IMR-90 (cell line): ENCODE measurements at regions of chr4 and their contacts with region 1.

Region 1: DNA sequence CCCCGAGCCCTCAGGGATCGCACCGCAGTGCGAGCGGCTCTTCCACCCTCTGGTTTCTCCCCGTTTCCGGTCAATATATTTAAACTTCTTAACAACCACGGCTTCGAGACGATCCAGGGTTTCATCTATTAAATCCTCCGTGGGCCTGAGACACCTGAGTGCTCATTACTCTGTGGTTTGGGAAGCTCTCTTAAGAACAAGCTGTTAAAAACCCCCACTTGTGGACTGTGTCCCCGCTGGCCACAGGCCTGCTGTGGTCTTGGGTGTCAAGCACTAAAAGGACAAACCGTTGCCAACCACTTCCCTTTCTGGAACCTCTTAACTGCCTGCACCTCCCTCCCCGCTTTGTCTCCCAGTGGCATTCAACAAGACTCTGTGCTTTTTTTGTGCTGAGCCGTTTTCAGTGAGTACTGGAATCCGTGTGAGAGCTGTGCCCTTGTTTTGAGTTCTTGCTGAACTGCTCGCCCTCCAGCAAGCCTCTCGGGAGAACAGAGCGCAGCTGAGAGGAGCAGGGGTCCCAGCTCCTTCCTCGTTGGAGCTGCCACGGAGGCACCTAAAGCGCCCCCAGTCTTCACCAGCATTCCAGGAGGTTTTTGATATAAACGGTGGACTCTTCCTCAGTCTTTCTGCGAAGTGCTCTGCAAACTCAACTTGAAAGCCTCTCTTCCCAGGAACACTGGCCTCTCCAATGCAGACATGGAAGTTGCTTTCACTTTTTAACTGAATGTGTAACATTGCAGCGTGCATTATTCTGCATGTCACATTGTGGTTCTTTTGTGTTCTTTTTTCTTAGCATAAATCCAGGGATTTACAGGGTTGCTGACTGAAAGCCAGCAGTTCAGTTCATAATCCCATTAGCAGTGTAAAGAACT is 691 bp upstream of the IGFBP7 start:
- DNase-seq: peak; percentile 68
- ATAC-seq: peak; percentile 50
- H3K4me3 ChIP-seq: peak overlapping the region; percentile 94
- H3K27ac ChIP-seq: peak overlapping the region; percentile 95
- H3K4me1 ChIP-seq: peaks cover 15% of the 10 kb centered on the region
- H3K27me3 ChIP-seq: no peaks in the 10 kb centered on the region
- CTCF ChIP-seq: no peak
- POLR2A ChIP-seq: no peak; the same call in 1 of the 2 replicates
- RAD21 ChIP-seq: peak; percentile 7; the same call in 1 of the 2 replicates

Region 2: DNA sequence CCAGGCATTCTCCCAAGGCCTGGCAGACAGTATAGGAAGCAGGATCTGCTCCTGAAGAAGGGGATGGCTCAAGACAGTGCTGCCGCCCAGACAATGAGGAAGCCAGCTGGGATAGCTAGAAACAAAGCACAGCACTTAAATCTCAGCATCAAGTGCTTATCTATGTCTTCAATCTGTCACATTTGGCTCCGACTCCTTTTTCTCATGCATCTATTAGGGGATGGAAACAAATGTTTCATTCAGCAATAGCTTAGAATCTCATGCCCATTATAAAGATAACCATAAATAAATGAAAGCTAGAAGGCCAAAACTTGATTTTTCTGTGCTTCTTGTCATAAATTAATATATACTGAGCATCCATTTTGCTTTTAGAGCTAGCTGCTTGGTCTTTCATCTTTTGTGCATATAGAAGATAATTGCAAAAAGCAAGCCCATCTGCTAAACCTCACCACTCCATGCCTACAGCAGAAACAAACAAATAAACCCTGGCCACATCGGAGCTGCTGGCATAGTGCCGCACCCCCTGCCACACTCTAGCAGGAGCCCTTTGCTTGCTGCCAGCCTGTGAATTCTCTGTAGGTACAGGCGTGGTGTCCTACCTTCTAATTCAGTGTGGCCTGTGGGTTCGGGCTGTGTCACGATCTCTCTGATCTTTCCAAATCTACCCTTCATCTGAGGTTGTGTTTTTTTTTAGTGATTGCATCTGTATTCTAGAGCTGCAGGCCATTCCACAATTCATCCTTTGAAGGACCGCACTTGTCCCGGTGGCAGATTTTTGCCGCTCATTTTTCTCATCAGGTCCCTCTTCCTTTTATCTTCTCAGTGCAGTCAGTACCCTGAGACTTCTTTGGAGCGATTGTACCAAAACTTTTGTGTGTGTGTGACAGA is 799.3 kb before region 1 on chr4:
- CTCF ChIA-PET with region 1: no interaction called
- POLR2A ChIA-PET with region 1: interaction called, 17 read pairs
- dilution Hi-C with region 1: no loop called
- in situ Hi-C with region 1: no loop called
- intact Hi-C with region 1: no loop called
- DNase-seq: no peak
- ATAC-seq: no peak
- H3K4me3 ChIP-seq: no peak overlapping the region
- H3K27ac ChIP-seq: no peak overlapping the region
- H3K4me1 ChIP-seq: no peaks in the 10 kb centered on the region
- H3K27me3 ChIP-seq: 0 out of 2 replicates have a peak, but pooled peaks cover 2% of the 10 kb centered on the region
- CTCF ChIP-seq: no peak
- POLR2A ChIP-seq: no peak
- RAD21 ChIP-seq: no peak

Region 3: GRCh38 chr4:57020467-57021101 is 90.3 kb before region 1 on chr4:
- CTCF ChIA-PET with region 1: interaction called, 5 read pairs
- POLR2A ChIA-PET with region 1: no interaction called
- dilution Hi-C with region 1: no loop called
- in situ Hi-C with region 1: no loop called
- intact Hi-C with region 1: loop called (anchors 5 kb)
- DNase-seq: peak; percentile 94
- ATAC-seq: peak; percentile 69
- H3K4me3 ChIP-seq: no peak overlapping the region
- H3K27ac ChIP-seq: no peak overlapping the region
- H3K4me1 ChIP-seq: peaks cover 8% of the 10 kb centered on the region
- H3K27me3 ChIP-seq: no peaks in the 10 kb centered on the region
- CTCF ChIP-seq: no peak
- POLR2A ChIP-seq: no peak
- RAD21 ChIP-seq: no peak

Region 4: DNA sequence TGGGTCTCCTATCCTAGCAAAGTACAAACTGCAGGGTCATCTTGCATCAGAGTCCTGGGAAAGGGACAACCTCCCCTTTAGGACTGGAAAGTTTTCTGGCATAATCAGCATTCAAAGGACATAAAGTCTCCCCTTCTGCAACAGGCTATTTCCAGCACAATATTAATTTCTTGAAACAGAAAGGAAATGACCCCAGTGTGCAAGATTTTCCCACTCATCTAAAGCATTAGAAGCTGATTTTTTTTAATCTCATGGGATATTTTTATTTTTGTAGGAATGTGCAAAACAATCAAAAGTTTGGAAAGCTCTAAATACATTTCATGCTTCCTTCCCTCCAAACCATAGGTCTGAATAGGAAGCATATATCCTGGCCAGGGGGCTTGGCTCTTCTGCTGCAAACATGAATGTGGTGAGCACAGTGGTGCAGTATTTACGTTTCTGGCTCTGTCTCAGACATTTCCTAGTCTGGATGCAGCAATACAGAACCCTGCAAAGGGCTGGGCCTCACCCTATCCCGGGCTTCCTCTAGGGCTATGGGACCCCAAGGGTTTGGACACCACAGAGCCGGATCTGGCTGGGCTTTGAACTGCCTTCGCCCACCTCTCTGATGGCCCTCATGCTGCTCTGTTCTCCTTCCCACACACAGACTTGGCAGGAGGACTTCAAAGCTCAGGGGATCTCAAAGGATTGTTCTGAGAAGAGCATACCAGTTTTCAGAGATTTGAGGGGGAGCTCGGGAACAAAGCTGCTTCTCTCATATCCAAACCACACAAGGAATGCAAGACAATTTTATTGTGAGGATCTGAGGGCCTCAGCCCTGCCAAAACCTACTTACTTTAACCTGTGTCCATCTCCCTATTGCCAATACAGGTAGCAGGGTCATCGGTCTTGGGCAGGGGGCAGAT is 67.3 kb before region 1 on chr4:
- CTCF ChIA-PET with region 1: interaction called, 5 read pairs
- POLR2A ChIA-PET with region 1: no interaction called
- dilution Hi-C with region 1: no loop called
- in situ Hi-C with region 1: no loop called
- intact Hi-C with region 1: loop called (anchors 2 kb)
- DNase-seq: peak; percentile 54
- ATAC-seq: peak; percentile 53
- H3K4me3 ChIP-seq: no peak overlapping the region
- H3K27ac ChIP-seq: peak overlapping the region; percentile 90
- H3K4me1 ChIP-seq: peaks cover 23% of the 10 kb centered on the region
- H3K27me3 ChIP-seq: no peaks in the 10 kb centered on the region
- CTCF ChIP-seq: no peak
- POLR2A ChIP-seq: no peak
- RAD21 ChIP-seq: no peak

Region 5: DNA sequence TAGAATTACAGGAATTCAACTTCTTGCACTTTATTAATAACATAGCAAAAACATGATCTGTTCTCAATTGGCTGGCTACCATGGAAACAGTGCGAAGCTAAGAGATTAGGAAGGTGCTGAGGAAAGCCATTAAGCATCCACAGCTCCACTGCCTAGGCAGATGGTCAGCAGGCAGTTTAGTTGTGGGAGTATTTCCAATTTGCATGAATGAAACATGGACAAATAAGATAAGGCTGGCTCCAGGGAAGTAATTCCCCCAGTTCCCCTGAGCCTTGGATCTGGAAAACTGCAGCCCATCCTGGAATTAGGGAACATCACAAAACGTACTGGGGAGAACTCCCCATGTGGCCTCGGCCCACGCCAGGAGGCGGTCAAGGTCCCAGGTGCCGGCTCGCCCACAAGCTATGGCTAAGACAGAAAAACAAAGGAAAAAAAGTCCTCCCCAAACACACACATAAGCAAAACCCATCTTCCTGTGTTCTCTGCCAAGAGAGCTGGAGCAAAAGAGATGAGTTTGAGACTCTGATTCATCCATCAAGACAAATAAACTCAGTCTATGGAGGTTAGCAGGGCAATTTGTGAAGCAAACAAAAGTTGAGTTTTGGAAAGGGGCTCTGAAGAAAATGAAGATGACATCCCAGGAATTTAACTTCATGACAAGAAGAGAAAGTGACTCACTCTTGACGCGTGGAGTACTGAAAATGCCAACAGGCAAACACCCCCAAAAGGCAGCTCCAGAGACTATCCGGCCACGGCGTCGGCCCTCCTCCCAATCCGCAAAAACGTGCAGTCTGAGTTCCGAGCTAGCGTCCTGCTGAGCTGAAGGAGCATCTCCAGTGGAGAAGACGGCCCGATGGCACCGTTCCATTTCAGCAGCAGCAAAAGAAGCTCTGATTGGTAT is 45.8 kb before region 1 on chr4:
- CTCF ChIA-PET with region 1: no interaction called
- POLR2A ChIA-PET with region 1: no interaction called
- dilution Hi-C with region 1: no loop called
- in situ Hi-C with region 1: no loop called
- intact Hi-C with region 1: loop called (anchors 5 kb)
- DNase-seq: peak; percentile 98
- ATAC-seq: peak; percentile 76
- H3K4me3 ChIP-seq: peak overlapping the region; percentile 8; the same call in 1 of the 2 replicates
- H3K27ac ChIP-seq: peak overlapping the region; percentile 65
- H3K4me1 ChIP-seq: peaks cover 30% of the 10 kb centered on the region
- H3K27me3 ChIP-seq: no peaks in the 10 kb centered on the region
- CTCF ChIP-seq: no peak
- POLR2A ChIP-seq: no peak; the same call in 1 of the 2 replicates
- RAD21 ChIP-seq: peak; percentile 1; the same call in 1 of the 2 replicates

Region 6: DNA sequence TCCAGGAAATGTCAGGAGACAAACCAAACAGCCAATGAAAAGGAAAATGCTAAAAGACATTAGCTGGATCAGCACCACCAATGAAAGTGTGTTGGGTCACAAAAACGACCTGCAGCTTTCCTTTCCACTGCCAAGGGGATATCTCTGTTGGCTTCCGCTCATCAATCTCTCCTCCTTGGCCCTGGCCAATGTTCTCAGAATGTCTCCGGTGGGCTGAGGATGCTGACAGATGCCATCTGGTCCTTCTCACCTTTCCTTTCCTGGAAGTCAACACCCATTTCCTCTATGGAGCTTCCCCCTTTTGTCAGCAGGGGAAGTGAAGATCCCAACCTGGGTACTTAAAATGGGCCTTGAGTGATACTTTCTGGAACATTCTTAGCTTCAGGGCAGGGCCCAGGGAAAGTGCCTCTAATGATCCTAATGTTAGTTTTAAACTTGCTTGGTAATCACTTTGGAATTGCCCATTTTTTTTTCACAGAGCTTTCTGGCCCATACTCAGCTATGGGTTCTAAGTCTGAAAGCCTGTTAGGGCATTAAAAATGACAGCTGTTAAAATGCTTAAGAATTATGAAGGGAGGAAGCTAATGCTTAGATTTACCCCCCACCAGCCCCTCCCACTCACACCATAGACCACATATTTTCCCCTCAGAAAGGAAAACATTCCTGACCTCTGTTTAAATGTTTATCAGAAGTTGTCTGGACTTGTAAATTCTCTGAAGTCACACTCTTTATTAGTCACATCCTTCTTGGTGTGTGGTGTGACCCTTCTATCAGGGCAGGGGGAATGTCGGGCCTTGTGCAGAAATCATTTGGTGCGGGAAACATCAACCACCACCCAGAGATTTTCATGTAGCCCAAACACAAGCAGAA is 29.9 kb before region 1 on chr4:
- CTCF ChIA-PET with region 1: interaction called, 5 read pairs
- POLR2A ChIA-PET with region 1: interaction called, 4 read pairs
- dilution Hi-C with region 1: no loop called
- in situ Hi-C with region 1: no loop called
- intact Hi-C with region 1: loop called (anchors 1 kb)
- DNase-seq: peak; percentile 98
- ATAC-seq: peak; percentile 83
- H3K4me3 ChIP-seq: no peak overlapping the region
- H3K27ac ChIP-seq: peak overlapping the region; percentile 91
- H3K4me1 ChIP-seq: peaks cover 23% of the 10 kb centered on the region
- H3K27me3 ChIP-seq: no peaks in the 10 kb centered on the region
- CTCF ChIP-seq: no peak
- POLR2A ChIP-seq: no peak
- RAD21 ChIP-seq: 0 out of 2 replicates have a peak, but pooled peaks have one; percentile 25